ENCODE measurements at regions of chr2 and their contacts with region 1.

Region 1: GRCh38 chr2:240840435-240841080 is 20.5 kb upstream of the KIF1A start:
- DNase-seq: peak; percentile 76
- H3K4me3 ChIP-seq: no peak overlapping the region
- H3K27ac ChIP-seq: no peak overlapping the region
- H3K4me1 ChIP-seq: no peaks in the 10 kb centered on the region
- H3K27me3 ChIP-seq: peaks cover 0 to 4% of the 10 kb centered on the region in 2 experiments
- CTCF ChIP-seq: peak; percentile 66 to 78
- POLR2A ChIP-seq: no peak

Region 2: GRCh38 chr2:240232961-240233893 is 607.3 kb before region 1 on chr2:
- CTCF ChIA-PET with region 1: interaction called, 3 read pairs
- POLR2A ChIA-PET with region 1: no interaction called
- dilution Hi-C with region 1: no loop called
- intact Hi-C with region 1: loop called (anchors 1 kb)
- DNase-seq: peak; percentile 44
- H3K4me3 ChIP-seq: no peak overlapping the region
- H3K27ac ChIP-seq: no peak overlapping the region
- H3K4me1 ChIP-seq: peaks cover 6% of the 10 kb centered on the region
- H3K27me3 ChIP-seq: no peaks in the 10 kb centered on the region
- CTCF ChIP-seq: peak; percentile 81 to 93
- POLR2A ChIP-seq: no peak

Region 3: DNA sequence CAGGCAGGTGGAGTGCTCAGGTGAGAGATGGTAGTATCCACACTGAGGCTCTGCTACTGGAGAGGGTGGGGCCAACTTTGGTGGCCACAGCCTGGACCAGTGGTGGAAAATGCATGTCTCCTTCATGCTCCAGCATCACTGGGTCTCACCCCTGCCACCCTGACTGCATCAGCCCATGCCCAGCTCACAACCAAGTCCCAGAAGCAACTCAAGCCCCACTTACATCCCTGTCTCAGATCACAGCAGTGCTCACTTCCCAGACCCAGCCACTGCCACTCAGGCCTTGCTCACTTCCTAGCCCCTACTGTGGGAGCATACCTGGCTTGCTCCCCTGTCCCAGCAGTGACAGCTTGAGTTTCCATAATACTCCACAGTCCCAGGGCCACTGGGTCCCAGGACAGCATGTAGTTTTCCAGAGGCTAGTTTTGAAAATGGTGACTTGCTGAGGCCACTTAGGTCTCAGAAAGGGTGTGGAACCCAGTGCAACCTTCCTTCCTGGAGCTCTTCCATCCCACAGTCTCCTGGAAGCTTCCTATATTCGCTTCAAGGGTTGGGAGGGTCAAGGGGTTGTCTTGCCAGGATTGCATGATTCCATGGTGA is 346.3 kb before region 1 on chr2:
- CTCF ChIA-PET with region 1: interaction called, 10 read pairs
- POLR2A ChIA-PET with region 1: no interaction called
- dilution Hi-C with region 1: no loop called
- intact Hi-C with region 1: no loop called
- DNase-seq: no peak
- H3K4me3 ChIP-seq: no peak overlapping the region
- H3K27ac ChIP-seq: no peak overlapping the region
- H3K4me1 ChIP-seq: no peaks in the 10 kb centered on the region
- H3K27me3 ChIP-seq: no peaks in the 10 kb centered on the region
- CTCF ChIP-seq: no peak
- POLR2A ChIP-seq: no peak

Region 4: DNA sequence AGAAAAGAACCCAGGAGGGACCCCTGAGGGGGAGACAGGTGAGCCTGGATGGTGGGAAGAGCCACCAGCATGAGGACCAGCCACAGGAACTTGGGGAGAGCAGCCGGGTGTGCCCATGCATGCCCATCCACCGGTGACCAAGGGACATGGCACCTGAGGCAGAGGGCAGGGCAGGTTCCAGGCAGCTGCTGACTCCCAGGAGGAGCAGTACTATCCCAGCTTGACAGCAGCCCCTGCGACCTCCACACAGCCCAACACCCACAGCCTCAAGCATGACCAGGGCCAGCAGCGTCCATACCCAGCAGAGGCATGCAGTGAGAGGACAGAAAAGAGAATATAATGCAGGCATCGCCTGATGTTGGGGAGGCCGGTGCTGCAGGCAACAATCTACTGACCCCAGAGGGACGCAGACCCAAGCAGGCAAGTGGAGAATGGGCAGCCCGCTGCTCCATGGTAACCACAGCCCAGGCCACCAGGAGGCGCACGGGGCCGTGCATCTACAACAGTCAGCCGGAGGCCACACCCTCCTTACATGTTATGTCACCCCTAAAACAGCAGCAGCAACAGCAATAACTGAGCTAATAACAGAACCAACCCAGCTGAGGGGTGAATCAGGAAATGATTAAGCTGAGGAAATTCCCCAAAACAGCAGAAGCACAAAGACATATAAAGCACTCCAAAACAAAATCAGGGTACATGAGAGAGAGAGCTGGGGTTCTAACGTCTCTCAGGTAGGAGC is 326.8 kb before region 1 on chr2:
- CTCF ChIA-PET with region 1: interaction called, 78 read pairs
- POLR2A ChIA-PET with region 1: no interaction called
- dilution Hi-C with region 1: no loop called
- intact Hi-C with region 1: loop called (anchors 1 kb)
- DNase-seq: peak; percentile 70
- H3K4me3 ChIP-seq: no peak overlapping the region
- H3K27ac ChIP-seq: no peak overlapping the region
- H3K4me1 ChIP-seq: no peaks in the 10 kb centered on the region
- H3K27me3 ChIP-seq: no peaks in the 10 kb centered on the region
- CTCF ChIP-seq: peak; percentile 87 to 92
- POLR2A ChIP-seq: no peak

Region 5: DNA sequence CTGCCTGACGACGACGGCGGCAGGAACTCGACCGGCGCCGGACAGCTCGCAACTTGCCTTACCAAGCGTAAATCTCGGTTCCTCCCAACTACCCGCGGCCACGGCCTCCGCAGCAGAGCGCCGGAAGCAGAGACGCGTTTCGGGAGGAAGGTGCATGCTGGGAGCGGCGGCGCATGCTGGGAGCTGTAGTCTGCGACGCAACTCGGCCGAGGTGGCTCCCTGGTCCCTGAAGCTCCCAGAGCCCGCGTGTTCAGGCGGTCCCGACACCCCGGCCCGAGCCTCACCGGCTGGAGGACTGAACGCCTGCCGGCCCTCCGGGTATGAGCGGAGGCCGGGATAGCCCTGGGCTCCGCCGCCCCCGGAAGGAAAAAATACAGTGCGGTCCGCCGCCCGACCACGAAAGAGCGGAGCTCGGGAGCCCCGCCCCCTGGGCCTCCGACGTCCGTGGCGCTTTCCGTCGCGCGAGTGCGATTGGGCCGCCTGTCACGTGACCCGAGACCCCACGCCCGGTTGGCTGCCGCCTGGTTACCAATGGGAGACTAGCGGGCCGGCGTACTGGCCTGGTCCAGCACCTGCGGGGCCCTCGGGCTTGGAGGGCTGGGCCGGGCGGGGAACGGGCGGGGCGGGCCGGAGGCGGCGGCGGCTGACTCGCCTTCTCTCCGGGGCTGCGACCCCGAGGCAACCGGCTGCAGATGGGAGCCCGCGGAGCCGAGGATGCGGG is 254.2 kb before region 1 on chr2 and contains the start of gene CAPN10:
- CTCF ChIA-PET with region 1: interaction called, 16 read pairs
- POLR2A ChIA-PET with region 1: no interaction called
- dilution Hi-C with region 1: no loop called
- intact Hi-C with region 1: no loop called
- DNase-seq: peak; percentile 95
- H3K4me3 ChIP-seq: peak within 1 kb of the TSS; percentile 76 to 84 (median 84)
- H3K27ac ChIP-seq: peak within 1 kb of the TSS; percentile 74
- H3K4me1 ChIP-seq: peaks cover 17% of the 10 kb centered on the region
- H3K27me3 ChIP-seq: no peaks in the 10 kb centered on the region
- CTCF ChIP-seq: no peak
- POLR2A ChIP-seq: peak; percentile 66
- total RNA-seq, gene CAPN10: 37.9 and 39.9 TPM in 2 replicates

Region 6: GRCh38 chr2:240742602-240743095 is 97.9 kb before region 1 on chr2:
- CTCF ChIA-PET with region 1: interaction called, 11 read pairs
- POLR2A ChIA-PET with region 1: no interaction called
- dilution Hi-C with region 1: no loop called
- intact Hi-C with region 1: no loop called
- DNase-seq: no peak
- H3K4me3 ChIP-seq: no peak overlapping the region
- H3K27ac ChIP-seq: no peak overlapping the region
- H3K4me1 ChIP-seq: no peaks in the 10 kb centered on the region
- H3K27me3 ChIP-seq: no peaks in the 10 kb centered on the region
- CTCF ChIP-seq: no peak
- POLR2A ChIP-seq: no peak

Measured in endothelial cell of umbilical vein (primary cell).